ENCODE measurements at regions of chr2 and their contacts with region 1.

Region 1: GRCh38 chr2:65129826-65130663 is at the start of gene RAB1A:
- DNase-seq: peak; percentile 99
- H3K4me3 Mint-ChIP-seq: peak within 1 kb of the TSS; percentile 99
- H3K27ac Mint-ChIP-seq: peak within 1 kb of the TSS; percentile 98
- H3K4me1 Mint-ChIP-seq: peaks cover 39% of the 10 kb centered on the region
- H3K27me3 Mint-ChIP-seq: peaks cover 9% of the 10 kb centered on the region
- total RNA-seq, gene RAB1A: 74.0 to 74.9 TPM

Region 2: DNA sequence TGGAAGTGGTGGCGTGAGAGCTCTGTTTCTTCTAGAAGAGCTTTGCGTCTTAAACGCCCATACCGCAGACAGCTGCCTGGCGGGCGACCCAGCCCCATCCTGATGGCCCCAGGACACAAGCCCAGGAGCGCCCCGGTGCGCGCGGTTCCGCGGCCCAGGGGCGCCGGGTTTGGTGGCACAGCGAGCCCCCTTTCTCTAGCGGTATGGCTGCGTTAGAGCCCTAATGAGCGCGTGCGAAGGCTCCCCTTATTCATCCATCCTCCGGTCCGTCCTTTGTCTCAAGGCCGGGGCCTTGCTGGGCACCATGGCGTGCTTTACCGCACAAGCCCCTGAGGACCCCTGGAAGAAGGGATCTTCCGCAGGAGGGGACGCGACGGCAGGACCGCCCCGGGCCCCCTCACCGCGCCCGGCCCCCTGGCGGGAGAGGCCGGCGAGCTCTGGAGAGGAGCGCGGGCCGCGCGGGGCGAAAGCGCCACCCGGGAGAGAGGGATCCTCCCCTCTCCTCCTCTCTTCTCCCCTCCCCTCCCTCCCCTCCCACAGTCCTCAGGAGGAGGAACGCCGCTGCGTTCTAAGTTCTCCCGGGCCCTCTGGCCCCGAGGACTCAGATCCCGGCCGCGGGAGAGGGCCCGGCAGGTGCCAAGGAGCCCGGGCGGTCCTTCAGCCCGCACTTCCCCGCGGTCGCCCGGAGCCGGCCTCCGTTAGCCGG is 141.5 kb before region 1 on chr2:
- CTCF ChIA-PET with region 1: interaction called, 4 read pairs
- POLR2A ChIA-PET with region 1: interaction called, 14 read pairs
- DNase-seq: peak; percentile 88
- H3K4me3 Mint-ChIP-seq: peak overlapping the region; percentile 72
- H3K27ac Mint-ChIP-seq: peak overlapping the region; percentile 74
- H3K4me1 Mint-ChIP-seq: peaks cover 70% of the 10 kb centered on the region
- H3K27me3 Mint-ChIP-seq: peaks cover 4% of the 10 kb centered on the region

Region 3: DNA sequence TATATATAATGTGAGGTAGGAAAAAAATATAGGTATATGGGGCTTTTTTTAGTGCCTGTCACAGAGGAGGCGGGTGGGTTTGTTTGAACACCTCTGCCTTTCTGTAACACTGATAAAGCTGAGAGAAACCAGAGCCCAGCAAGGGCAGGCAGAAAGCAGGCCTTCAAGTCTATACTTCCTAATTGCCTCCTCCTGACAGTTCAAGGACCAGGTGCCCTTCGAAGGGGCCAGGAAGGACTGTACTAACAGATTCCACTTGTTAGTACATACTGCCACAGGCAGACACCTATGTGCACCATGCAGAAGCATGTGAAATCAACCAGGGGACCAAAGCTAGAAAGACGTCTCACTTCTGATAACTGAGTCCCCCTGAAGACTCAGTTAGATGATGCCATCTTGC is 127.0 kb before region 1 on chr2:
- CTCF ChIA-PET with region 1: no interaction called
- POLR2A ChIA-PET with region 1: no interaction called
- DNase-seq: no peak
- H3K4me3 Mint-ChIP-seq: no peak overlapping the region
- H3K27ac Mint-ChIP-seq: no peak overlapping the region
- H3K4me1 Mint-ChIP-seq: peaks cover 9% of the 10 kb centered on the region
- H3K27me3 Mint-ChIP-seq: no peaks in the 10 kb centered on the region

Region 4: GRCh38 chr2:65070172-65070830 is 59.7 kb before region 1 on chr2:
- CTCF ChIA-PET with region 1: interaction called, 38 read pairs
- POLR2A ChIA-PET with region 1: interaction called, 13 read pairs
- DNase-seq: no peak
- H3K4me3 Mint-ChIP-seq: no peak overlapping the region
- H3K27ac Mint-ChIP-seq: peak overlapping the region; percentile 44
- H3K4me1 Mint-ChIP-seq: peaks cover 32% of the 10 kb centered on the region
- H3K27me3 Mint-ChIP-seq: no peaks in the 10 kb centered on the region

Region 5: GRCh38 chr2:65142515-65142914 is 12.5 kb after region 1 on chr2:
- CTCF ChIA-PET with region 1: interaction called, 5 read pairs
- POLR2A ChIA-PET with region 1: interaction called, 11 read pairs
- DNase-seq: no peak
- H3K4me3 Mint-ChIP-seq: no peak overlapping the region
- H3K27ac Mint-ChIP-seq: no peak overlapping the region
- H3K4me1 Mint-ChIP-seq: peaks cover 2% of the 10 kb centered on the region
- H3K27me3 Mint-ChIP-seq: peaks cover 17% of the 10 kb centered on the region

Region 6: GRCh38 chr2:65227425-65228262 is 97.6 kb after region 1 on chr2 and contains the start of gene ACTR2:
- CTCF ChIA-PET with region 1: interaction called, 17 read pairs
- POLR2A ChIA-PET with region 1: interaction called, 73 read pairs
- DNase-seq: peak; percentile 96
- H3K4me3 Mint-ChIP-seq: peak within 1 kb of the TSS; percentile 96
- H3K27ac Mint-ChIP-seq: peak within 1 kb of the TSS; percentile 99
- H3K4me1 Mint-ChIP-seq: peaks cover 46% of the 10 kb centered on the region
- H3K27me3 Mint-ChIP-seq: no peaks in the 10 kb centered on the region
- total RNA-seq, gene ACTR2: 514 to 517 TPM

Measured in activated CD4-positive, alpha-beta memory T cell treated with anti-CD3 and anti-CD28 coated beads, Interleukin-2, amount 10 ng/mL, durations not matched to agents 7 days and 5 days (primary cell).